Left cardiac atrium (tissue), 4 donors: ENCODE measurements at regions of chr5 and their contacts with region 1.

Region 1: GRCh38 chr5:36606428-36607113 is at the start of gene SLC1A3:
- DNase-seq: peak; percentile 53
- ATAC-seq: peak; percentile 88 to 96
- total RNA-seq, gene SLC1A3: 44.9 to 66.6 TPM

Region 2: DNA sequence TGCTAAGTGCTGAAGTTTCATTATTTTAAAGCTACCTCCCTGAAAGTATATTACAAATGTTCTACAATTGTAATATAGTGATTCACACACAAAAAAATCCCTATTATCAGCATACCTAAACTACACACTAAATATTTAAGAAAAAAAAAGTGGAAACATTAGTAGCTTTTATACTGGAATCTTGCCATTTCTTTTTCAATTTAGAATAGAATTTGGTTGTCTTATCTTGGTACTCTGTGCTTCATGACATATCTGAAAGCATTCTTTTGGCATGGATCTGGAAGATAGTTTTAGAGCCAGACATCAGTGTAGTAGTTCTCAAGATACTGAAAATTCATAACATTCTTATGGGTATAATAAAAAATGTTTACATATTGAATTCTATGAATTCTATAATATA is 34.9 kb after region 1 on chr5:
- intact Hi-C with region 1: no loop called
- DNase-seq: no peak
- ATAC-seq: peak in 1 of 2 donors; percentile 32

Region 3: GRCh38 chr5:36651761-36652685 is 45.5 kb after region 1 on chr5:
- intact Hi-C with region 1: loop called in 1 of 2 experiments (anchors 5 kb)
- DNase-seq: no peak
- ATAC-seq: peak; percentile 61 to 72